ENCODE measurements at regions of chr16 and their contacts with region 1.

Region 1: DNA sequence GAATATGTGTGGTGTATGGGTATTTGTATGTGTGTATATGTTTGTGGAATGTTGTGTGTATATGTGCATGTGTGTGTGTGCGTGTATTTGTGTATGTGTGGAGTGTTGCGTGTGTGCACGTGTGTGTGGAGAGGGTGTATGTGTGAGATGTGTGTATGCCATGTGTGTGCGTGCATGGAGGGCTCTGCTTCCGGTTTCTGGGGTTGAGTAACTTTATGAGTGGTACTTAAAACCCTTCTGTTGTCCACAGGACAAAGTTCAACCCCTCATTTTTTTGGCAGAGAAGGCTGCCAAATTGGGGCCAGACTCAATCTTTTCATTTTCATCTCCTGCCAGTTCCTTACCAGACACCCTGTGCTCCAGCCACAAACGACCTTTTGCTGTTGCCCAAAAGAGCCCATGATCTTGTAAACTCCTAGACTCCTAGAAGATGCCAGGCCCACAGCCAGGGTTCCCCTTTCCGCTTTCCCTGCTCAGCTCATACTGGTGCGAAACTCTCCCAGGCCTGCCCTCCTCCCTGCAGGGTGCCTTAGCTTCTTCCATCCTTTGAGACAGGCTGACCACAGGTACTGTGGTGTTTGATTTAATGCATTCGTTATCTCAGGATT is 100.2 kb downstream of the CMIP start:
- DNase-seq: peak; percentile 40 to 61 (median 51)
- H3K4me3 ChIP-seq: peak overlapping the region in 1 of 3 experiments; percentile 34
- H3K4me3 Mint-ChIP-seq: peak overlapping the region; percentile 21 to 83
- H3K27ac ChIP-seq: peak overlapping the region; percentile 19 to 55
- H3K27ac Mint-ChIP-seq: peak overlapping the region in 6 of 7 donors; percentile 6 to 85 (median 62)
- H3K4me1 ChIP-seq: peaks cover 70 to 71% of the 10 kb centered on the region in 2 donors
- H3K4me1 Mint-ChIP-seq: peaks cover 80% of the 10 kb centered on the region
- H3K27me3 ChIP-seq: no peaks in the 10 kb centered on the region
- H3K27me3 Mint-ChIP-seq: peaks cover 0 to 3% (median 2%) of the 10 kb centered on the region in 3 donors
- CTCF ChIP-seq: no peak

Region 2: DNA sequence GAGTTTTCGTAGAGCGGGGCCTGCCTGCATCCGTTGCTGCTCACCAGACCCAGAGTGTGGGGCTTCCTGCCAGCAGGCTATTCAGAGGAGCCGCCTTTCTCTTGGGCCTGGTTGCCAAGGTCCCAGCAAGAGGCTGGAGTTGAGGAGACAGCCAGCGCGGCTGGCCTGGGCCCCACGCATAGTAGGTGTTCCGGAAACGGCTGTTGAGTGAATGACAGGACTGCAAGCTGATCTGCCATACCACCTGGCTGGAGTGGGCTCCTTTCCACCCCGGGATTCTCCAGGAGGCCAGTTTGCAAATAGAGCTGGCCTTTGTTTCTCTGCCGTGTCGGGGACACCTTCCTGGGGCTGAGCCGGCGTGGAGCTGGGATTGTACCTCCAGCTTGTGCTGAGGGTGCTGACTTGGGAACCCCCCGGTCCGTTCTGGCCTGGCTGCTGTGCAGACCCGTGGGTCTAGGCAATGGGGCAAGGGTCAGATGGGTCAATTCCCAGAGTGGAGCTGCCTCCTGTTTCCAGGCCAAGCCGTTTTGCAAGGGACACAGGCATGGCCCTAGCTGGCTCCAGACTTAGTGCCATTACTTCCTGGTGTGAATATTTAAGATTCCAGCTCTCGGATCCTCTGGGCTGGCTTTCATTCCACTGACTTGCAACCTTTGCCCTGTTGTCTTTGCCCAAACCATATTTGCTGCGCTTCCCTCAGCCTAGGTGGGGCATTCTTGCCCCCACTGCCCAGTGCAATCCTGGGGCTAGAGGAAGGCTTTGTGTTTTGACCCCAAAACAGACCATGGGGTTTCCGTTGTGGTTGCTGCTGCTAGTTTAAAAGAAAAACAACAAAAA is 31.3 kb before region 1 on chr16:
- intact Hi-C with region 1: loop called in 1 of 2 experiments (anchors 5 kb)
- DNase-seq: no peak
- H3K4me3 ChIP-seq: peak overlapping the region in 1 of 3 experiments; percentile 22
- H3K4me3 Mint-ChIP-seq: peak overlapping the region; percentile 16 to 72
- H3K27ac ChIP-seq: peak overlapping the region; percentile 10 to 53
- H3K27ac Mint-ChIP-seq: peak overlapping the region in 6 of 7 donors; percentile 1 to 84 (median 70)
- H3K4me1 ChIP-seq: peaks cover 22 to 39% of the 10 kb centered on the region in 2 donors
- H3K4me1 Mint-ChIP-seq: peaks cover 51% of the 10 kb centered on the region
- H3K27me3 ChIP-seq: no peaks in the 10 kb centered on the region
- H3K27me3 Mint-ChIP-seq: peaks cover 0 to 3% (median 2%) of the 10 kb centered on the region in 3 donors
- CTCF ChIP-seq: no peak